Activated B cell treated with CpG ODN at 0.5 μM for 24 hours (primary cell): ENCODE measurements at regions of chr1 and their contacts with region 1.

Region 1: DNA sequence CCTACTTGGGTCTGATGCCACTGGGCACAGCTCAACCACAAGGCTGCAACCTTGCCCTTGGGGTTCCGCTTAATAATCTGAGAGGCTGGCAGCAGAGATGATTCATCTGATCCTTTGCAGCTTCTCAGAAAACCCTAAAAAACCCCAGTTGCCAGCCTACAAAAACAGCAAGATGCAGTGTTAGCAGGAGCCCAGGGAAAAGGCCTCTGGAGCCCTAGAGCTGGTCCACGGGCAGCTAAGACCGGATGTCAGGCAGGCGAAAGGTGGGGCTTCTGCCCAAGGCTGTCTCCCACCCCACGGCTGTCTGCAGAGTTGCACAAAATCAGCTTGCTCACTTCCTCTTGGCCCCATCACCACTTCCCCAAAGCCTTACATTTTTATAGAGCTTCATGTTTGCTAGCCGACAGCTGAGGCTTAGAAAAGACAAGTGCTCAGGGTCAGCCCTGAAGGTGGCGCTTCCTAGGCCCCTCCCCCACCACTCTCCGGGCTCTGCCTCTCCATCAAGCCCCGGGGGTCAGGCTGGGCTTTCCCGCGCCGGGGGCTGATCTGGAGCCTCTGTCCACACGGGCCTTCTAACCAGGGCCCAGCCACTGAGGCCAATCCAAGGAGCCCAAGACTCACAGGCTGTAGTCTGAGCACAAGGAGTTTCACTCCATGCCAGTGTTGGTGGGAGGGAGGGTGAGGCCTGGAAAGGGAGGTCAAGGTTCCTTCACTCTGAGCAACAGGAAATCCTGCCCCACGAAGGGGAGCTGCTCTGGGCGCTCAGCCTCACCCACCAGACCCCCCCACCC is 4.2 kb upstream of the ADORA3 start:
- DNase-seq: peak; percentile 66
- ATAC-seq: peak; percentile 67
- H3K4me3 Mint-ChIP-seq: peak overlapping the region; percentile 77
- H3K27ac Mint-ChIP-seq: no peak overlapping the region
- H3K4me1 Mint-ChIP-seq: peaks cover 67% of the 10 kb centered on the region
- H3K27me3 Mint-ChIP-seq: no peaks in the 10 kb centered on the region
- CTCF ChIP-seq: no peak

Region 2: GRCh38 chr1:110872745-110873720 is 634.6 kb before region 1 on chr1 and contains the start of gene CD53:
- CTCF ChIA-PET with region 1: no interaction called
- POLR2A ChIA-PET with region 1: no interaction called
- intact Hi-C with region 1: loop called (anchors 2 kb)
- DNase-seq: peak; percentile 27
- ATAC-seq: peak; percentile 64
- H3K4me3 Mint-ChIP-seq: peak within 1 kb of the TSS; percentile 96
- H3K27ac Mint-ChIP-seq: peak within 1 kb of the TSS; percentile 99
- H3K4me1 Mint-ChIP-seq: peaks cover 75% of the 10 kb centered on the region
- H3K27me3 Mint-ChIP-seq: no peaks in the 10 kb centered on the region
- CTCF ChIP-seq: no peak
- total RNA-seq, gene CD53: 491 and 522 TPM in 2 replicates

Region 3: GRCh38 chr1:111481387-111482221 is 26.0 kb before region 1 on chr1:
- CTCF ChIA-PET with region 1: interaction called, 123 read pairs
- POLR2A ChIA-PET with region 1: interaction called, 234 read pairs
- intact Hi-C with region 1: loop called (anchors 1 kb)
- DNase-seq: no peak
- ATAC-seq: peak; percentile 73
- H3K4me3 Mint-ChIP-seq: no peak overlapping the region
- H3K27ac Mint-ChIP-seq: no peak overlapping the region
- H3K4me1 Mint-ChIP-seq: peaks cover 42% of the 10 kb centered on the region
- H3K27me3 Mint-ChIP-seq: no peaks in the 10 kb centered on the region
- CTCF ChIP-seq: no peak

Region 4: DNA sequence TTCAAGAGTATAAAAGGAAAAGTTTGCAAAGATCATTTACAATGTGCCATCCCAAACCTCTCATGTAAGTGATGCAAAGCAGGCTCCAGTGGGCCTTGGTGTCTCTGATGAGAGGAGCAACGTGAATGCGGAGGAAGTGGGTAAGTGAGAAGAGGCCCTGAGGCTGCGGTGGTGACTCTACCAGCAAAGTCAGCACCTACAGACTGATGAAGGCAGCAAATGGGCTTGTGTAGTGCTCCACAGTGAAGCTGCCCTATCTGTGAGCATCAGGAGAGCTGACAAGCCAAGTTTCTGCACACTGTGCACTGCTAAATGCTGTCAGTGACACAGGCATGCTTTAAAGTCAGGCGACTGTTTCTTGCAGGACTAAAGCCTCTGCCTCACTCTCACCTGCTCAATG is 96.4 kb after region 1 on chr1:
- CTCF ChIA-PET with region 1: interaction called, 15 read pairs
- POLR2A ChIA-PET with region 1: interaction called, 18 read pairs
- intact Hi-C with region 1: no loop called
- DNase-seq: no peak
- ATAC-seq: peak; percentile 65
- H3K4me3 Mint-ChIP-seq: peak overlapping the region; percentile 58
- H3K27ac Mint-ChIP-seq: peak overlapping the region; percentile 81
- H3K4me1 Mint-ChIP-seq: peaks cover 67% of the 10 kb centered on the region
- H3K27me3 Mint-ChIP-seq: no peaks in the 10 kb centered on the region
- CTCF ChIP-seq: no peak

Region 5: DNA sequence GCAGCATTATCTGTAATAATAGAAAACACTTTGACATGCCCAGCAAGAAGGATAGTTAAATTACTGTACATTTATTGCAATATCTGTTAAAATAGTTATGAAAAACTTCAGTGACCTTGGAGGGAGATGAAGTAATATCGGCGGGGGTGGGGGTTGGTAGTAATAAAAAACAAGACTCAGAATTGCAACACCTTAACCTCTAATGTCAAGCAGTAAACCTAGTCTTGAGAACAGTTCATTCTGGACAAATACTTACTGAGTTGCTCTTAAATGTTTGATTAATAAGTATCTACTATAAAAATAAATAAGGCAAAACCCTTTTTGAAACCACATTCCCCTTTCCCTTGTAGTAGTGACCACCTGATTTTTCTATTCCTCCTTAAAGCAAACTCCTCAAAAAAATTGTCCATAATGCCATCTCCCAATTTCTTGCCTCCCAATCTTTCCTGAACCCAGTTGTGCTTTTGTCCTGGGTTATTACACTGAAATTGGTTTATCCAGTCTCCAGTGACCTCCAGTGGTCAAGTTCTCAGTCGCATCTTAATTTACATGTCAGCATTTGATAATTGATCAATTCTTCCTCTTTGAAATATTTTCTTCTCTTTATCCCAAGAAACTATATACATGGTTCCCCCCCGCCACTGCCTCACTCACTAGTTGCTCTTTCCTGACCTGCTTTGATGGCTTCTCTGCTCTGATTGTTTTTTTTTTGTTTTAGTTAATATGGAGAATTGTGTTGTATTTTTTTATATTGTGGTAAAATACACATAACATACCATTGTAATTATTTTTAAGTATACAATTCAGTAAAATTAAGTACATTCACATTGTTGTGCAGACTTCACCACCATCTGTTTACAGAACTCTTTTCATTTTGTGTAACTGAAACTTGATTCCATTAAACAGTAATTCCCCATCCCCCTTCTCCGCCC is 148.7 kb after region 1 on chr1:
- CTCF ChIA-PET with region 1: interaction called, 16 read pairs
- POLR2A ChIA-PET with region 1: interaction called, 15 read pairs
- intact Hi-C with region 1: loop called (anchors 1 kb)
- DNase-seq: no peak
- ATAC-seq: no peak
- H3K4me3 Mint-ChIP-seq: no peak overlapping the region
- H3K27ac Mint-ChIP-seq: no peak overlapping the region
- H3K4me1 Mint-ChIP-seq: peaks cover 35% of the 10 kb centered on the region
- H3K27me3 Mint-ChIP-seq: no peaks in the 10 kb centered on the region
- CTCF ChIP-seq: peak; percentile 52

Region 6: DNA sequence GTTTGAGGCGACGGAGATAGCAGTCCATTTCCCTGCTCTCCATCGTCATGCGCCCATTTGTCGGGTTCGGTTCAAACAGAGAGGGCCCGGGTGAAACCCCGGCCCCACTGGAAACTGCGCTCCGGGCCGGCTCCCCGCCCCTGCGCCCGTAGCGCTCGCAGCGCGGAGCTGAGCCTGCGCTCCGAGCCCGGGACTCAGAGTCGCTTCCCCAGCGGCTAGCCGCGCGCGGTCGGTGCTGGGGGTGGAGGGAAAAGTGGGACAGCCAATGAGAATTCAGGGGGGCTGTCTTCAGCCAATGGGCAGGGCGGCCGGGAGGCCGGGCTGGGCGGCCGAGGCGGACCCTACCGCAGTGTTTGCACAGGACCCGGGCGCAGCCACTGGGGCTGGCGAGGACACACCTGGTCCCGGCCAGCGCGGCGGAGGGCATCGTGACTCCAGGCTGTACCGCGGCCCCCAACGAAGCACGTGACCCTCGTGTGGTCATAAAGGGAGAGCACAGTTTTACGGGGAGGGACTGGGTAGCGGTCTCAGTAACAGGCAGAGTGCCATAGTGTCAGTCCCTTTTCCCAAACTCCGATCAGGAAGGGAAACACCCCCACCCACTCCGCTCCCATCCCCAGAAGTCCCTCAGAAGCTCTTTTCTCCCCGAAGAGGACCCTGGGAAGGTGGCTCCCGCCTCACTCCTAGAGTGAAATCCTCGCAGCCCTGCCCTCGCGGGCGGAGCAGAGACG is 231.8 kb after region 1 on chr1 and contains the start of gene INKA2:
- CTCF ChIA-PET with region 1: interaction called, 8 read pairs
- POLR2A ChIA-PET with region 1: interaction called, 19 read pairs
- intact Hi-C with region 1: no loop called
- DNase-seq: peak; percentile 74
- ATAC-seq: peak; percentile 77
- H3K4me3 Mint-ChIP-seq: peak within 1 kb of the TSS; percentile 92
- H3K27ac Mint-ChIP-seq: peak within 1 kb of the TSS; percentile 84
- H3K4me1 Mint-ChIP-seq: peaks cover 18% of the 10 kb centered on the region
- H3K27me3 Mint-ChIP-seq: peaks cover 2% of the 10 kb centered on the region
- CTCF ChIP-seq: no peak
- total RNA-seq, gene INKA2: 1.3 and 2.1 TPM in 2 replicates